Activated naive CD4-positive, alpha-beta T cell treated with anti-CD3 and anti-CD28 coated beads for 36 hours (primary cell): ENCODE measurements at regions of chr10 and their contacts with region 1.

Region 1: DNA sequence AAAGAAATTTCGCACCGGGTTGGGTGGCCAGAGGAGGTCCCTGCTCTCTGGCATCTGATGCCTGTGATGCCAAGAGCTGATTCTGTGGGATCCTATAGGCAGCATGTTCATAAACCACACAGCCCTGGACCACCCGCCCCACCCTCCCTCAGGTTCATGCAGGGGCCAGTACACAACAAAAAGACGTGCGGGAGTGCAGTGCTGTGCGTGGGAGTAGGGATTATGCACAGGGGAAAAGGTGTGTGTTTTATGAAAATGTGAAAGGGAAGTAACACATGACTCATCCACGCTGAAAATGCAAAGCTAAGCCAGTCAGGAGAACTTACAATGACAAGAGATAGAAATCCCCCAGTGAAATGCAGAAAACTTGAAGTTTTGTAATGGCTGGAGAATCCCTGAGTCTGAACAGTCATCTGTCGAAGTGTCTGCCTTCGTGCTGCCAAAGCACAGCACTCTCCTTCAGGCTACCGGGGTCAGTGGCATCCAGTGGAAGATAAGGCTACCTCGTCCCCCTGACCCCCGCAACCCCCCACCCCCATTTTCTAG is 1.1 kb downstream of the KIAA1217 start:
- DNase-seq: peak; percentile 78
- H3K4me3 Mint-ChIP-seq: peak overlapping the region; percentile 69
- H3K27ac Mint-ChIP-seq: peak overlapping the region; percentile 76
- H3K4me1 Mint-ChIP-seq: peaks cover 29% of the 10 kb centered on the region
- H3K27me3 Mint-ChIP-seq: peaks cover 47% of the 10 kb centered on the region

Region 2: DNA sequence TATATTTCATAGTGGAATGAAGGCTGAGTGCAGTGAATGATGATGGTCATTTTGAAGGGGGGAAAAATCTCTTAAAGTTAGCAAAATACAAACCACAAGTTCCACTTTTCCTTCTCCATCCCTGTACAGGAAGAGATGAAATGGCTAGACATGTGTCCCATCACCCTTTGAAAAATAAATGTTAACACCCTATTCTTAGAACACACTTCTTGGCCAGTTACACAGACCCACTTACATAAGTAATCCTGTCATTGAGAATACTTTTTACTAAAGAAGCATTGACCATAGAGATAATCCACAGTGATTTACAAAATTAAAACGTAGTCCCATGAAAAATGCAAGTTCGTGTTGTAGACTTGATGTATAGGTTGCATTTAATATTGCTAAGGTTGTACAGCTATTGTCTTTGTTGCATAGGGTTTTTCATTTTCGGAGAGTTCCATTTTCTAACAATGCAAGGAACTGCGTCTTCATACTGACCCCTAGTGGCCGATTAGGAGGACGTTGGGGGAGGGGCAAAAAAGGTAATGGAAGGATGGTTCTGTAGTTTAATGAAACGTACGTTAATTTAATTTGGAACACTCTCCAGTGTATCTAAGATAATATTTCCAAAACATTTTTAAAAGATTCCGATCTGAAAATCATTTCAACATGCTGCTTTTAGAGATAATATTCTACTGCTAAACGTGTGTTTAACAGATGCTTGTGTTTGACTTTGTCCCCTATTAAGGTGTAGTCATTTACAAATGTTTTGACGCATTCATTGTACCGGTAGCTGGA is 1221.2 kb before region 1 on chr10:
- CTCF ChIA-PET with region 1: no interaction called
- intact Hi-C with region 1: no loop called
- DNase-seq: peak; percentile 82
- H3K4me3 Mint-ChIP-seq: no peak overlapping the region
- H3K27ac Mint-ChIP-seq: no peak overlapping the region
- H3K4me1 Mint-ChIP-seq: peaks cover 11% of the 10 kb centered on the region
- H3K27me3 Mint-ChIP-seq: no peaks in the 10 kb centered on the region

Region 3: GRCh38 chr10:23095404-23095965 is 1114.5 kb before region 1 on chr10 and contains the start of gene MSRB2:
- CTCF ChIA-PET with region 1: no interaction called
- intact Hi-C with region 1: loop called (anchors 5 kb)
- DNase-seq: peak; percentile 92
- H3K4me3 Mint-ChIP-seq: peak within 1 kb of the TSS; percentile 97
- H3K27ac Mint-ChIP-seq: peak within 1 kb of the TSS; percentile 90
- H3K4me1 Mint-ChIP-seq: peaks cover 34% of the 10 kb centered on the region
- H3K27me3 Mint-ChIP-seq: no peaks in the 10 kb centered on the region
- total RNA-seq, gene MSRB2: 13.9 to 16.0 TPM

Region 4: GRCh38 chr10:23535381-23535780 is 674.6 kb before region 1 on chr10:
- CTCF ChIA-PET with region 1: no interaction called
- intact Hi-C with region 1: loop called (anchors 1 kb)
- DNase-seq: no peak
- H3K4me3 Mint-ChIP-seq: peak overlapping the region; percentile 14
- H3K27ac Mint-ChIP-seq: peak overlapping the region; percentile 72
- H3K4me1 Mint-ChIP-seq: peaks cover 77% of the 10 kb centered on the region
- H3K27me3 Mint-ChIP-seq: no peaks in the 10 kb centered on the region

Region 5: GRCh38 chr10:23715363-23715762 is 494.7 kb before region 1 on chr10:
- CTCF ChIA-PET with region 1: no interaction called
- intact Hi-C with region 1: loop called (anchors 1 kb)
- DNase-seq: no peak
- H3K4me3 Mint-ChIP-seq: no peak overlapping the region
- H3K27ac Mint-ChIP-seq: no peak overlapping the region
- H3K4me1 Mint-ChIP-seq: peaks cover 12% of the 10 kb centered on the region
- H3K27me3 Mint-ChIP-seq: peaks cover 28% of the 10 kb centered on the region

Region 6: GRCh38 chr10:24465891-24466818 is 256.1 kb after region 1 on chr10:
- CTCF ChIA-PET with region 1: no interaction called
- intact Hi-C with region 1: loop called (anchors 1 kb)
- DNase-seq: peak; percentile 76
- H3K4me3 Mint-ChIP-seq: no peak overlapping the region
- H3K27ac Mint-ChIP-seq: peak overlapping the region; percentile 28
- H3K4me1 Mint-ChIP-seq: peaks cover 31% of the 10 kb centered on the region
- H3K27me3 Mint-ChIP-seq: peaks cover 8% of the 10 kb centered on the region

Region 7: DNA sequence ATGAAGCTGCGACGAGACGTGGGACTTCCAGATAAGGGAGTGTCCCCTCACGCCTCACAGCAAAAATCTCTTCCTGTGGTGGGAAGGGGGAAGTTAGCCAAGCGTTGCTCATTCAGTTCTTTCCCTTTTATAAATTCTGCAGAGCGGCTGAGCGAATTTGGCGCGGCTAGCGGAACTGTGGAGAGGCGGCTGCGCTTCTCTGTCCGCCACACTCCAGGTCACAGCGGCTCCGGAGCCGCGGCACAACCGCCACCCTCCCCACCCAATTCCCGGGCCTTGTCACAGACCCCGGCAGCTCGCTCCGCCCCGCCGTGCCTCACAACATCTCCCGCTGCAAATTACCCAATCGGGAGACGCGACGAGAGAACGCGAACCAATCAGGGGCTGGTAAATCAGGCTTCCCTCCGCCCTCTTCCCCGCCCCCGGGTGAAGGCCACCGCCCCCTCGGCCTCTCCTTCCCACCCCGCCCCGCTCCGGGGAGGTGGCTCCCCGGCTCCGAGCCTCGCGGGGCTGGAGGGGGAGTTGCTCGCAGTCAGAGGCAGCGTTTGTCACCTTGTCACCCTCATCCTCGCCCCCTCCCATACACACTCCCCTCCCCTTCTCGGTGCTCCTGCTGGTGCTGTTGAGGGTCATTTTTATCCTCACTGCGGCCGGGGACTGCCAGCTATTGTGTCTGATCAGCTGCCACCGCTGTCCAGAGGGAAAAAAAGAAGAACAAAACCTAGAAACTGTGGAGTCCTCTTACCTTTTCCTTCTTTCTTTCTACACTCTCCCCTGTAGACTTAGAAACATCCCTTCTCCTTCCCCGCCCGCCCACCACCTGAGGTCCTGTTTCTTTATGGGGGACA is 514.6 kb after region 1 on chr10:
- CTCF ChIA-PET with region 1: no interaction called
- intact Hi-C with region 1: loop called (anchors 5 kb)
- DNase-seq: peak; percentile 97
- H3K4me3 Mint-ChIP-seq: peak overlapping the region; percentile 89
- H3K27ac Mint-ChIP-seq: peak overlapping the region; percentile 89
- H3K4me1 Mint-ChIP-seq: peaks cover 14% of the 10 kb centered on the region
- H3K27me3 Mint-ChIP-seq: no peaks in the 10 kb centered on the region

Region 8: DNA sequence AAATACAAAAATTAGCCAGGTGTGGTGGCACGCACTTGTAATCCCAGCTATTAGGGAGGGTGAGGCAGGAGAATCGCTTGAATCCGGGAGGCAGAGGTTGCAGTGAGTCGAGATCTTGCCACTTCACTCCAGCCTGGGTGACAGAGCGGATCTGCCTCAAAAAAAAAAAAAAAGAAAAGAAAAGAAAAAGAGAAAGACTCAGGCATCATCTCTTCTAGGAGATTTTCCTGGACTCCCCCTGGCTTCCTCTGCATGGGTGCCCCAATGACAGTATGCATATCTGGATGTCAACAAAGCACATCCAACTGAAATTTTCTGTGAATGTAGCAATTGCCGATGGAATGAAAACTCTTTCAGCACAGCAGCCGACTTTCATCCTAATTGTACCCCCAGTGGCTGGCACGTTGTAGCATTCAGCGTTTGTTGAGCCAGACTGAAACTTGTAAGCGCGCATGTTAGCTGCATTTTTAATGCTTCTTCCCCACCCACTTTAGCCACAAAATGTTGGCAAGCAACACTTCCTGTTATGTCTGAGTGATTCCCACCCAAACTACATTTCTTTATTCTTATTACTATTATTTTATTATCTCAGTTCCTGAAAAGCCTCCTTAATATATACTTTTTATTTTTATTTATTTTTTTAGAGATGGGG is 672.2 kb after region 1 on chr10:
- CTCF ChIA-PET with region 1: no interaction called
- intact Hi-C with region 1: no loop called
- DNase-seq: peak; percentile 71
- H3K4me3 Mint-ChIP-seq: peak overlapping the region; percentile 13
- H3K27ac Mint-ChIP-seq: no peak overlapping the region
- H3K4me1 Mint-ChIP-seq: peaks cover 44% of the 10 kb centered on the region
- H3K27me3 Mint-ChIP-seq: no peaks in the 10 kb centered on the region